Naive thymus-derived CD4-positive, alpha-beta T cell (primary cell): ENCODE measurements at regions of chr3 and their contacts with region 1.

Region 1: DNA sequence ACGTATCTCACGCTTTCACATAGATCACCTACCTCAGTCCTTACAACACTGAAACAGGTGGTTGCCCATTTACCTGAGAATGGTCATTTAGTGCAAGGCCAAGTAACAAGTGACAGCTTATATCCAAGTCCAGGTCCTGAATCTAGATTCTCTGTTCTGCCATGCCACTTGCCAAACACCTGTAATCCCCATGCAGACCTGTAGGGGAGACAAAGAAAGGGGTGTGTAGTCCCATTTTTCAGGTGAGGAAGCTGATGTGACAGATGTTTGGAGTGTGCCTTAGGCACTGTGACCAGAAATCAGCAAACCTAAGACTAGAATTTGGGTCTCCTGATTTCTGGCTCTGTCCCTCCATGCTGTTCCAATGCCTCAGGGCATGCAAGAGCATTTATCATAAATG is 12.7 kb downstream of the ZNF35 start:
- DNase-seq: no peak
- ATAC-seq: no peak
- H3K4me3 ChIP-seq: no peak overlapping the region
- H3K4me3 Mint-ChIP-seq: no peak overlapping the region
- H3K27ac ChIP-seq: no peak overlapping the region
- H3K27ac Mint-ChIP-seq: no peak overlapping the region
- H3K4me1 ChIP-seq: no peaks in the 10 kb centered on the region
- H3K4me1 Mint-ChIP-seq: no peaks in the 10 kb centered on the region
- H3K27me3 ChIP-seq: no peaks in the 10 kb centered on the region
- H3K27me3 Mint-ChIP-seq: peaks cover 0 to 6% (median 0%) of the 10 kb centered on the region in 5 donors

Region 2: DNA sequence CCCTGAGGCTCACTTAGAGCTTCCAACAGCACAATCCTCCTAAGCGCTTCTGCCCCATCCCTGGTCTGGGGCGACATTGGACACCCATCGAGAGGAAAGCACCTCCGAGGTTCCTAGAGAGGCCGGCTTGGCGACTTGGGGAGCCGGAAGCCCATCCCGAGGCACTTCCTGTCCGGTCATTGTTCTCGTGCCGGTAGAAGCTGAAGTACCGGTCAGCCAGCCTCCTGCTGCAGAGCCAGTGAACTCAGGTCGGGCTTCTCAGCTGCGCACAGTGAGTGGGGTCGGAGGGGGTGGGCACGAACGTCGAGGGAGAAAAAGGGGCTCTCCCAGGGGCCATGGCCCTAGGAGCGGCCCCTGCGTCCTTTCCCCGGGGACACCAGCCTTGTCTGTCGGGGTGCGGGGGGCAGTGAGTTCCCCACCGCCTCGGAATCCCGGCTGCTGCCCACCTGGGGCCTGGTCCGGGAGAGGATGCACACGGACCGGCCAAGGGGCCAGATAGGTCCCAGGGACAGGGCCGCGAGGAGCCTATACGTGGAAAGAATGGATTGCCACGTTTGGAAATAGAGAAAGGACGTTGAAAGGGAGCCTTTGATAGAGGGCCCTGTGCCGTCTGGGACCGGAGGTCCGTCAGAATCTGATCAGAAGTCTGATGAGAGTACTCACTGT is 12.5 kb before region 1 on chr3 and contains the start of gene ZNF35:
- CTCF ChIA-PET with region 1: interaction called, 10 read pairs
- POLR2A ChIA-PET with region 1: no interaction called
- intact Hi-C with region 1: no loop called
- DNase-seq: peak in 1 of 9 donors; percentile 37
- ATAC-seq: peak; percentile 60
- H3K4me3 ChIP-seq: peak within 1 kb of the TSS; percentile 50
- H3K4me3 Mint-ChIP-seq: peak within 1 kb of the TSS; percentile 68 to 84 (median 80)
- H3K27ac ChIP-seq: no peak within 1 kb of the TSS
- H3K27ac Mint-ChIP-seq: peak within 1 kb of the TSS in 6 of 9 donors; percentile 7 to 69 (median 47)
- H3K4me1 ChIP-seq: no peaks in the 10 kb centered on the region
- H3K4me1 Mint-ChIP-seq: peaks cover 9 to 27% (median 19%) of the 10 kb centered on the region in 7 donors
- H3K27me3 ChIP-seq: no peaks in the 10 kb centered on the region
- H3K27me3 Mint-ChIP-seq: peaks cover 0 to 19% (median 0%) of the 10 kb centered on the region in 5 donors
- total RNA-seq, gene ZNF35: 1.3 to 3.2 (median 2.0) TPM